CD4-positive, alpha-beta T cell (primary cell): ENCODE measurements at regions of chr16 and their contacts with region 1.

Region 1: DNA sequence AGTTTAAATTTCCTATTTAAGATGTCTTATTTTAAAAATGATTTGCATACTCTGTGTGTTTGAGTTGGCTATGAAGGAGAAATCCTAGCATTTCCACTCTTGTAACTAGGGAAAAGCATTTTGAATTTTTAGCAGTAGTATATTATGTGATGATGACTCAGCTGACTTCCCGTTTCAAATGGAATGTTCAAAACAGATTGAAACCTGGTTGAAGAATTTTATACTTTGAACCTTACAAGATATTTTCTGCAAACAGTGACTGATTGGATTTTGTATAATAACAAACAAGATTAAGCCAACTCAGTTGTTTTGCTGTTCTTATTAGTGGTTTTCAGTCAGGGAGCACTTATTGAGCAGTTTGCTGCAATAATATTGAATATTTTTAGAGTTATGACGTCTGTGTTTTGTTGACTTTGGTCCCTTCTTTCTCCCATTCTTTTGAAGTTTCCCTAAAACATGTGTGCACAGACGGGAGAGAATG is 8.0 kb downstream of the TNRC6A start:
- DNase-seq: no peak
- ATAC-seq: no peak
- H3K4me3 ChIP-seq: no peak overlapping the region
- H3K4me3 Mint-ChIP-seq: peak overlapping the region; percentile 3
- H3K27ac ChIP-seq: no peak overlapping the region
- H3K27ac Mint-ChIP-seq: no peak overlapping the region
- H3K4me1 ChIP-seq: peaks cover 35% of the 10 kb centered on the region
- H3K4me1 Mint-ChIP-seq: peaks cover 94% of the 10 kb centered on the region
- H3K27me3 ChIP-seq: no peaks in the 10 kb centered on the region
- H3K27me3 Mint-ChIP-seq: no peaks in the 10 kb centered on the region
- CTCF ChIP-seq: no peak

Region 2: GRCh38 chr16:24776501-24777220 is 39.2 kb after region 1 on chr16:
- CTCF ChIA-PET with region 1: no interaction called
- POLR2A ChIA-PET with region 1: no interaction called
- intact Hi-C with region 1: loop called in 1 of 2 experiments (anchors 5 kb)
- DNase-seq: no peak
- ATAC-seq: no peak
- H3K4me3 ChIP-seq: no peak overlapping the region
- H3K4me3 Mint-ChIP-seq: no peak overlapping the region
- H3K27ac ChIP-seq: no peak overlapping the region
- H3K27ac Mint-ChIP-seq: no peak overlapping the region
- H3K4me1 ChIP-seq: peaks cover 4% of the 10 kb centered on the region
- H3K4me1 Mint-ChIP-seq: peaks cover 55% of the 10 kb centered on the region
- H3K27me3 ChIP-seq: no peaks in the 10 kb centered on the region
- H3K27me3 Mint-ChIP-seq: no peaks in the 10 kb centered on the region
- CTCF ChIP-seq: no peak